Panc1 (cell line): ENCODE measurements at regions of chr18 and their contacts with region 1.

Region 1: DNA sequence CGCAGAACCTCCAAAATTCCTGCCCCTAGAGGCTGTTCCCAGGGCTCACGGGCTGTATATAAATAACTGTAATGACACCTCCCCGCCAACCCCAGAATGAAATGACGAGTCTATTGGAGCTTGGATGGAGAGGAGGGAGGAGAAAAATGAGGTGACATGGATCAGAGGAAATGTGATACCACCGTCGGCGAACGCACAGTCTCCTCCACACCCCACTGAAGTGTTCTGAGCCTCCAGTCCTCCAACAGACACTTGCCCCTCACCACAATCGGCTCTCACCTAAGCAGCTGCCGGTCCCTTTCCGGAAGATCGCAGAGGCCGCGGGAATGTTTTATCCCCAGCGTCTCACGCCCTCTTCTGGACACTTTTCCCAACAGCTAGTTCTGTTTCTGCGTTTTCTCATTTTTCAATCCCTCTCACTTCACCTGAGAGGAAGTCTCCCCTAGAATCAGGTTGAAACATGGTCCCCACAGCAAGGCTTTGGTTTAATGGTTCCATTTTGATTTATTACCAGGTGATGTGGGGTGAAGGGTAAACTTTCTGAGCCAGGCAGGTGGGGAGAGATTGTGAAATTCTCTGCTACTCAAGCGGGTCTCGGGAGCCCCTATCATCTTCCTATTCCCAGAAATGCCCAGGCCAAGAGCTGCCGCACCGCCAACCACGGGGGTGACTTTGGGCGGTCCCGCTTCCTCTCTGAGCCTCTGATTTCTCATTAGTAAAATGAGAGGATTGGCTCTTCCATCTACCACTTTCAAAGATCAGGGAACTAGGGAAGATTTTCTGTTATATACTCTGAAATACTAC is 9.1 kb upstream of the MYO5B start:
- DNase-seq: no peak
- ATAC-seq: peak; percentile 69; the same call in 1 of the 2 replicates
- H3K4me3 ChIP-seq: 0 out of 4 replicates have a peak overlapping the region, but pooled peaks of 1 of the 2 experiments have one; percentile 20
- H3K27ac ChIP-seq: no peak overlapping the region
- H3K4me1 ChIP-seq: no peaks in the 10 kb centered on the region
- H3K27me3 ChIP-seq: peaks cover 5% of the 10 kb centered on the region; the same call in 1 of the 2 replicates
- CTCF ChIP-seq: peak; percentile 68

Region 2: GRCh38 chr18:50119296-50119695 is 84.7 kb before region 1 on chr18:
- CTCF ChIA-PET with region 1: no interaction called
- POLR2A ChIA-PET with region 1: interaction called, 13 read pairs
- in situ Hi-C with region 1: no loop called
- intact Hi-C with region 1: no loop called
- DNase-seq: no peak
- ATAC-seq: no peak
- H3K4me3 ChIP-seq: no peak overlapping the region
- H3K27ac ChIP-seq: no peak overlapping the region
- H3K4me1 ChIP-seq: no peaks in the 10 kb centered on the region
- H3K27me3 ChIP-seq: no peaks in the 10 kb centered on the region
- CTCF ChIP-seq: no peak